ENCODE measurements at regions of chr4 and their contacts with region 1.

Region 1: GRCh38 chr4:6681187-6681586 is 12.5 kb upstream of the S100P start:
- DNase-seq: no peak
- ATAC-seq: no peak
- H3K4me3 ChIP-seq: no peak overlapping the region
- H3K4me3 Mint-ChIP-seq: no peak overlapping the region
- H3K27ac ChIP-seq: no peak overlapping the region
- H3K27ac Mint-ChIP-seq: peak overlapping the region in 1 of 2 donors; percentile 25
- H3K4me1 ChIP-seq: peaks cover 17 to 33% of the 10 kb centered on the region in 2 experiments
- H3K4me1 Mint-ChIP-seq: peaks cover 25 to 48% (median 41%) of the 10 kb centered on the region in 3 donors
- H3K27me3 ChIP-seq: no peaks in the 10 kb centered on the region
- H3K27me3 Mint-ChIP-seq: no peaks in the 10 kb centered on the region

Region 2: DNA sequence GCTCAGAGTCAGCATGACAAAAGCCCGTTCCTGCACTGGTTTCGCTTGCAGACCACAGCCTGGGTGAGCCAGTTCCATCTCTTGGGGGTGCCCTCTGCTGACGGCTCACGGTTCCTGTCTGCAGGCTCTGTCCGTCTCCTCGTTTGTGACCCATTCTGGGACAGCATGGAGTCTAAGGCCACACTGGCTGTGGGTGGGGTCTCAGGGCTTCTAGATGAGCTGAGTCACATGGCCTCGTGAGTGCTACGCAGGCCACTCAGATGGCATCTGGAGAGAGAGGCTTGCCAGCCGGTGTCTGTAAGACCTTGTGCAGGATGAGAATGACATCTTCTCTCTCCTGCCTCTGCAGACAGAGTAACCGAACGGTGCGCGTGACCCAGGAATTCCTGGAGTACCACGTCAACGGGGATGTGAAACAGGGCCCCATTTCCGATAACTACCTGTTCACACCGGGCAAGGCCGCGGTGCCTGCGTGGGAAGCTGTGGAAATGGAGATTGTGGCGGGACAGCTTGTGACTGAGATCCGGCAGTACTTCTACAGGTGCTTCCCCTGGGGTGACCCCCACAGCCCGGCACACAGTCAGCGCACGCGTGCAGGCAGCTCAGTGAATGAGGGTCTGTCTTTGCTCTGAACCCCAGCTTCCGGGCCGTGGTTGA is 72.3 kb before region 1 on chr4:
- CTCF ChIA-PET with region 1: no interaction called
- POLR2A ChIA-PET with region 1: no interaction called
- DNase-seq: peak in 10 of 35 experiments; percentile 2 to 28 (median 7)
- ATAC-seq: peak in 1 of 4 experiments; percentile 41
- H3K4me3 ChIP-seq: no peak overlapping the region
- H3K4me3 Mint-ChIP-seq: no peak overlapping the region
- H3K27ac ChIP-seq: no peak overlapping the region
- H3K27ac Mint-ChIP-seq: no peak overlapping the region
- H3K4me1 ChIP-seq: peaks cover 0 to 9% of the 10 kb centered on the region in 2 experiments
- H3K4me1 Mint-ChIP-seq: peaks cover 0 to 1% (median 0%) of the 10 kb centered on the region in 3 donors
- H3K27me3 ChIP-seq: no peaks in the 10 kb centered on the region
- H3K27me3 Mint-ChIP-seq: no peaks in the 10 kb centered on the region

Region 3: DNA sequence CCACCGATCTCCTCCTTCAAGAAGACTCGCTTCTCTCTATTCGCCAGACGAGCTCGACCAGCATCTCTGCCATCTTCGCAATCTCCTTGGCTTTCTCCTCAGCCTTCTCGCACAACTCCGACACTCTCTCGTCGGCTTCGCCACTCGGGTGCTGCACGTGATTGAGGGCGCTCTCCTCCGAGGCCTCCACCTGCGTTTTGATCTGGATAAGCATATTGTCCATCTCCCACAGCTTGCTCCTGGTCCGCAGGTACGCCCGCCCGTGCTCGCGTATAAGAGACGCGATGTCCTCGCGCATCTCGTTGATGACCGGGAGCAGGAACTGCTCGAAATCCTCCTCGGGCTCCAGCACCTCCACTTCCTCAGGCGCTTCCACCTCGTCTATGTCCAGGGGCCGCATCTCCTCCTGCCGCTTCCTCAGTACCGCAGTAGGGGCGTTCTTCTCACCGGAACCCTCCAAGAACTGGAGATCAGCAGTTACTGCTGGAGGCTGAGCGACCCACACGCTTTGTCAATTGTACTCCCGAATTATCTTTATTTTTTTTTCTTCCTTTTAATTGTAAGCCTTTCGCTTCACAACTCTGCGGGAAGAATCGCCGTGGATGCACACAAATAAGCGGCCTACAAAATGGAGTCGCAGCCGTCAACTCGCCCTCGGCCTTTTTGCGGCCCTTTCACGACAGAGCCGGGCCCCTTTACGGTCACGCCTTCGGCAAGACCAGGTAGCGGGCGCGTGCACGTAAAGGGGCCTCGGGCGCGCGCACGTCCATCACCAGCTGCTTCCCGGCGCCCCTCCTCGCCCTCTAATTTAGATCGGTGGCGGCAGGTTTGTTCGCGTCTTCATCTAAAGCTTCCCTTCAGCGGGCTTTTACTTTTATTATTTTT is 28.3 kb after region 1 on chr4 and contains the start of gene MRFAP1L1:
- CTCF ChIA-PET with region 1: no interaction called
- POLR2A ChIA-PET with region 1: interaction called in 1 of 2 experiments, 10 read pairs
- DNase-seq: peak; percentile 92 to 99 (median 97)
- ATAC-seq: peak; percentile 83 to 90 (median 86)
- H3K4me3 ChIP-seq: peak within 1 kb of the TSS; percentile 67 to 87
- H3K4me3 Mint-ChIP-seq: peak within 1 kb of the TSS; percentile 96 to 100 (median 97)
- H3K27ac ChIP-seq: peak within 1 kb of the TSS; percentile 71
- H3K27ac Mint-ChIP-seq: peak within 1 kb of the TSS; percentile 97 to 99
- H3K4me1 ChIP-seq: peaks cover 22 to 39% of the 10 kb centered on the region in 2 experiments
- H3K4me1 Mint-ChIP-seq: peaks cover 60 to 71% (median 62%) of the 10 kb centered on the region in 3 donors
- H3K27me3 ChIP-seq: no peaks in the 10 kb centered on the region
- H3K27me3 Mint-ChIP-seq: no peaks in the 10 kb centered on the region
- total RNA-seq, gene MRFAP1L1: 28.8 to 121 (median 112) TPM

Region 4: GRCh38 chr4:7192252-7193029 is 511.3 kb after region 1 on chr4 and contains the start of gene SORCS2:
- CTCF ChIA-PET with region 1: no interaction called
- POLR2A ChIA-PET with region 1: no interaction called
- DNase-seq: peak in 25 of 35 experiments; percentile 7 to 64 (median 27)
- ATAC-seq: peak; percentile 50 to 79 (median 65)
- H3K4me3 ChIP-seq: no peak within 1 kb of the TSS
- H3K4me3 Mint-ChIP-seq: peak within 1 kb of the TSS; percentile 45 to 60 (median 54)
- H3K27ac ChIP-seq: no peak within 1 kb of the TSS
- H3K27ac Mint-ChIP-seq: no peak within 1 kb of the TSS
- H3K4me1 ChIP-seq: peaks cover 0 to 10% of the 10 kb centered on the region in 2 experiments
- H3K4me1 Mint-ChIP-seq: peaks cover 0 to 1% (median 1%) of the 10 kb centered on the region in 3 donors
- H3K27me3 ChIP-seq: peaks cover 0 to 73% of the 10 kb centered on the region in 2 experiments
- H3K27me3 Mint-ChIP-seq: peaks cover 53 to 78% of the 10 kb centered on the region in 2 donors
- total RNA-seq, gene SORCS2: 0.22 TPM in 1 of 5 donors, not detected in the others